CD8-positive, alpha-beta T cell (primary cell): ENCODE measurements at regions of chr7 and their contacts with region 1.

Region 1: DNA sequence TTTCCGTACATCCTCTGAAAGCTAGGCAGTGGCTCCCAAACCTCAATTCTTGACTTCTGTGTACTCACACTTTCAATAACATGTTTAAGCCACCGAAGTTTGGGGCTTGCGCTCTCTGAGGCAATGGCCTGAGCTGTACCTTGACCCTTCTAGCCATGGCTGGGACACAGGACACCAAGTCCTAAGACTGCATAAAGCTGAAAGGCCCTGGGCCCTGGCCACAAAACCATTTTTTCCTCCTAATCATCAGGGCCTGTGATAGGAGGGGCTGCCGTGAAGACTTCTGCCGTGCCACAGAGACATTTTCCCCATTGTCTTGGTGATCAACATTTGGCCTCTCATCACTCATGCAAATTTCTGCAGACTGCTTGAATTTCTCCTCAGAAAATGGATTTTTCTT is 216.5 kb upstream of the TEX47 start:
- DNase-seq: no peak
- ATAC-seq: no peak
- H3K4me3 ChIP-seq: no peak overlapping the region
- H3K4me3 Mint-ChIP-seq: no peak overlapping the region
- H3K27ac ChIP-seq: no peak overlapping the region
- H3K27ac Mint-ChIP-seq: no peak overlapping the region
- H3K4me1 ChIP-seq: no peaks in the 10 kb centered on the region
- H3K4me1 Mint-ChIP-seq: no peaks in the 10 kb centered on the region
- H3K27me3 ChIP-seq: no peaks in the 10 kb centered on the region
- H3K27me3 Mint-ChIP-seq: no peaks in the 10 kb centered on the region
- CTCF ChIP-seq: no peak

Region 2: DNA sequence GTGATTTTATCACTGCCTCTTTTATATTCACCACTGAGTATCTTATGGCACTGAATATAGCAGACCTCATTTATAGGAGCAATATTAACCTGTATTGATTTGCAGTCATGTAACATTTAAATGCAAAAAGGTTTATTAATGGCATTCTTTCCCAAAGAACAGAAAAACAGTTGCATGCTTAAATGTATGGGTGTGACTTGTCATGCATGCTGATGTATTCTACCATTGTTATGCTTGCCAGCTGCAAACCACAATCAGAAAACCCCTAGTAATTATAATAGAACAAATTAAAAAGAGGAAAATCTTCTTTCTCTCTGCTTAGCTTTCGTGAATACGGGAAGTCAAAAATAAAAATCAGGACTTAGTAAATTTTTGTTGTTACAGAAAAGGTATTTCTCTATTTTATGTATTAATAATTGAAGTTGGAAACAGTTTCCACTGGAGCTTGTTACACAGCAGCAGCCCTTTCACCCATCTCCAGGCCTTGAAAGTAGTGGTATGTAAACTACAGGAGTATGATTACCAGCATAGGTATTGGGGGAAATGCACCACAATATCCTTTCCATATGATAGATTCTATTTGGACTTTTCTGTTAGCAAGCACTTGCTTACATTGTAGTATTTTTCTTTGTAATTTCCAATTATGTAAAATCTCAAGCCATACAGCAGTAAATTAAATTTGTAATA is 69.1 kb before region 1 on chr7:
- CTCF ChIA-PET with region 1: no interaction called
- POLR2A ChIA-PET with region 1: no interaction called
- intact Hi-C with region 1: loop called in 1 of 2 experiments (anchors 2 kb)
- DNase-seq: no peak
- ATAC-seq: no peak
- H3K4me3 ChIP-seq: no peak overlapping the region
- H3K4me3 Mint-ChIP-seq: no peak overlapping the region
- H3K27ac ChIP-seq: no peak overlapping the region
- H3K27ac Mint-ChIP-seq: no peak overlapping the region
- H3K4me1 ChIP-seq: no peaks in the 10 kb centered on the region
- H3K4me1 Mint-ChIP-seq: no peaks in the 10 kb centered on the region
- H3K27me3 ChIP-seq: no peaks in the 10 kb centered on the region
- H3K27me3 Mint-ChIP-seq: no peaks in the 10 kb centered on the region
- CTCF ChIP-seq: no peak